K562 (cell line): ENCODE measurements at regions of chr4 and their contacts with region 1.

Region 1: DNA sequence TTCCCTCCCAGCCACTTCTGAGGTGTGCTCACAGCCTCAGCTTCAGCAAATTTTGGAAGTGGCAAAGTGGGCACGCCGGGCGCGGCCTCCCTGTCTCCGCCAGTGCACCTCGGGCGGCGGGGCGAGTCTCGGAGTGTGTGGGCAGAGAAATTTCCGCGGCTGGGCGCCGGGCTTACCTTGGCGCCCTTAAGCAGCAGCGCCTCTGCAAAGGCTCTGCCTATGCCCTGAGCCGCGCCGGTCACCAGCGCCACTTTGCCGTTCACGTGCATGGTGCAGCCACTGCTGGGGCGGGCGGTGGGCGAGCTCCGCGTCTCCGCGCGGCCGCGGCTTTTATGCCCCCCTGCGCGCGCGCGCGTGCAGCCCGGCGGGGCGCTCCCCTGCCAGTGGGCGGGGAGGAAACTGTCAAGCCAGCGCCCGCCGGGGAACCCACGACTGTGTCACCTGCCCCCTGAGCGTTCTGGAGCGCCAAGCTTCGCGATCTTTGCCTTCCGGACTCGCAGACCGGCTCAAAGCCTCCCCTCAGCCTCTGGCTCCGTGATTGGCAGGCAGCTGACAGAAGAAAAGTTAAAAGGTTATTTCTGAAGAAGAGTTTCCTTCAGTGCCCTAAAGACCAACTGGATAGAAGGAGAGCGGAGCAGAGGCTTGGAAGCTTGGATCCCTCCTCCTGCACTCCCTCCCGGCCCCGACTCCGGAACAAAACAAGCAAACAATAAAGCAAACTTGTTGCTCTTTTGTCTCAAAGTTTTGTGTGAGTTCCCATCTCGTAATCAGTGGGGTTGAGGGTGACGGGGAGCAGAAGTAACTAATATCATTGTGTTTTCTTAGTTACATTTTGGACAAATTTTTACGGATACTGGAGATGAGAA is at the start of gene HPGD:
- DNase-seq: peak; percentile 25 to 61 (median 36)
- ATAC-seq: peak; percentile 88
- H3K4me3 ChIP-seq: peak within 1 kb of the TSS; percentile 64
- H3K27ac ChIP-seq: peak within 1 kb of the TSS; percentile 41
- H3K4me1 ChIP-seq: peaks cover 9 to 13% of the 10 kb centered on the region in 2 experiments; a peak in 3 of 5 replicates
- H3K27me3 ChIP-seq: no peaks in the 10 kb centered on the region
- CTCF ChIP-seq: no peak
- EP300 ChIP-seq: no peak
- POLR2A ChIP-seq: no peak
- RAD21 ChIP-seq: no peak
- polyA plus RNA-seq, gene HPGD: 2.3 to 3.2 TPM

Region 2: DNA sequence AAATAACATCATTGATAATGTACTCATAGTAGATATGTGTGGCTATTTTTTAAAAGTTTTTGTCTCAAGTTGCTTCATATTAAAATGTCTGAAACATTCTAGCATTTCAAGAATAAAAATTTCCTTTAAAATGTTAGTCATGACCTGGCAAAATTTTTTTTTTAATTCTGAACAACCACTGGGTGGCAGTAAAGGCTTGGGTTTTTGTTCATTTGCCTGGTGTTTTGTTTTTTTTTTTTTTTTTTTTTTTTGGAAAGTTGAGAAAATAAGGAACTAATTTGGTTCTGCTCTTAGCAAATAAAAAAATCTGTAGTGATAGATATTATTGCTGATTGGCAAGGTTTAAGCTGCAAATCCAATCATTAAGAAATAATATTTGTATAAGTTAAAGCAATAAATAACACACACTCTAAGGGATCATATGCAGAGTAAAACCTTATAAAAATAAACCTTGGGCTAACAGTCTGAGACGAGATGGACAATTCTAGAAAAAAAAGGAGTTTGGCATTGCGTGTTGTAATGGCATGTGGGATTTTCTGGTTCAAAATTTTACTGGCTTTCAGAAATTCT is 157.3 kb before region 1 on chr4:
- CTCF ChIA-PET with region 1: no interaction called
- POLR2A ChIA-PET with region 1: no interaction called
- in situ Hi-C with region 1: no loop called
- intact Hi-C with region 1: loop called (anchors 2 kb)
- DNase-seq: peak; percentile 15 to 68 (median 20)
- ATAC-seq: no peak
- H3K4me3 ChIP-seq: no peak overlapping the region
- H3K27ac ChIP-seq: no peak overlapping the region
- H3K4me1 ChIP-seq: no peaks in the 10 kb centered on the region
- H3K27me3 ChIP-seq: no peaks in the 10 kb centered on the region
- CTCF ChIP-seq: peak; percentile 17 to 67 (median 47); a peak in 3 of 6 replicates
- EP300 ChIP-seq: no peak
- POLR2A ChIP-seq: no peak
- RAD21 ChIP-seq: peak; percentile 55 to 80

Region 3: GRCh38 chr4:174423257-174423944 is 99.0 kb before region 1 on chr4:
- CTCF ChIA-PET with region 1: no interaction called
- POLR2A ChIA-PET with region 1: no interaction called
- in situ Hi-C with region 1: no loop called
- intact Hi-C with region 1: loop called (anchors 5 kb)
- DNase-seq: peak in 3 of 4 experiments; percentile 13 to 75 (median 43)
- ATAC-seq: peak; percentile 52
- H3K4me3 ChIP-seq: no peak overlapping the region; the same call in 1 of the 2 replicates
- H3K27ac ChIP-seq: peak overlapping the region; percentile 76
- H3K4me1 ChIP-seq: peaks cover 11 to 36% of the 10 kb centered on the region in 2 experiments; a peak in 4 of 5 replicates
- H3K27me3 ChIP-seq: no peaks in the 10 kb centered on the region
- CTCF ChIP-seq: no peak
- EP300 ChIP-seq: peak; percentile 76
- POLR2A ChIP-seq: no peak
- RAD21 ChIP-seq: no peak; a peak in 1 of 4 replicates

Region 4: GRCh38 chr4:174437324-174437723 is 85.1 kb before region 1 on chr4:
- CTCF ChIA-PET with region 1: no interaction called
- POLR2A ChIA-PET with region 1: no interaction called
- in situ Hi-C with region 1: no loop called
- intact Hi-C with region 1: no loop called
- DNase-seq: no peak
- ATAC-seq: no peak
- H3K4me3 ChIP-seq: no peak overlapping the region
- H3K27ac ChIP-seq: no peak overlapping the region
- H3K4me1 ChIP-seq: 0 out of 5 replicates have a peak, but pooled peaks cover 0 to 4% of the 10 kb centered on the region in 2 experiments
- H3K27me3 ChIP-seq: no peaks in the 10 kb centered on the region
- CTCF ChIP-seq: no peak
- EP300 ChIP-seq: no peak
- POLR2A ChIP-seq: no peak
- RAD21 ChIP-seq: no peak

Region 5: GRCh38 chr4:174460684-174461083 is 61.7 kb before region 1 on chr4:
- CTCF ChIA-PET with region 1: no interaction called
- POLR2A ChIA-PET with region 1: no interaction called
- in situ Hi-C with region 1: no loop called
- intact Hi-C with region 1: no loop called
- DNase-seq: no peak
- ATAC-seq: no peak
- H3K4me3 ChIP-seq: no peak overlapping the region
- H3K27ac ChIP-seq: no peak overlapping the region
- H3K4me1 ChIP-seq: no peaks in the 10 kb centered on the region
- H3K27me3 ChIP-seq: no peaks in the 10 kb centered on the region
- CTCF ChIP-seq: no peak
- EP300 ChIP-seq: no peak
- POLR2A ChIP-seq: no peak
- RAD21 ChIP-seq: no peak

Region 6: GRCh38 chr4:174580597-174580996 is 58.2 kb after region 1 on chr4:
- CTCF ChIA-PET with region 1: no interaction called
- POLR2A ChIA-PET with region 1: no interaction called
- in situ Hi-C with region 1: no loop called
- intact Hi-C with region 1: no loop called
- DNase-seq: no peak
- ATAC-seq: no peak
- H3K4me3 ChIP-seq: no peak overlapping the region
- H3K27ac ChIP-seq: no peak overlapping the region
- H3K4me1 ChIP-seq: no peaks in the 10 kb centered on the region; a peak in 1 of 5 replicates
- H3K27me3 ChIP-seq: no peaks in the 10 kb centered on the region
- CTCF ChIP-seq: no peak
- EP300 ChIP-seq: peak; percentile 46; the same call in 1 of the 2 replicates
- POLR2A ChIP-seq: no peak
- RAD21 ChIP-seq: no peak

Region 7: DNA sequence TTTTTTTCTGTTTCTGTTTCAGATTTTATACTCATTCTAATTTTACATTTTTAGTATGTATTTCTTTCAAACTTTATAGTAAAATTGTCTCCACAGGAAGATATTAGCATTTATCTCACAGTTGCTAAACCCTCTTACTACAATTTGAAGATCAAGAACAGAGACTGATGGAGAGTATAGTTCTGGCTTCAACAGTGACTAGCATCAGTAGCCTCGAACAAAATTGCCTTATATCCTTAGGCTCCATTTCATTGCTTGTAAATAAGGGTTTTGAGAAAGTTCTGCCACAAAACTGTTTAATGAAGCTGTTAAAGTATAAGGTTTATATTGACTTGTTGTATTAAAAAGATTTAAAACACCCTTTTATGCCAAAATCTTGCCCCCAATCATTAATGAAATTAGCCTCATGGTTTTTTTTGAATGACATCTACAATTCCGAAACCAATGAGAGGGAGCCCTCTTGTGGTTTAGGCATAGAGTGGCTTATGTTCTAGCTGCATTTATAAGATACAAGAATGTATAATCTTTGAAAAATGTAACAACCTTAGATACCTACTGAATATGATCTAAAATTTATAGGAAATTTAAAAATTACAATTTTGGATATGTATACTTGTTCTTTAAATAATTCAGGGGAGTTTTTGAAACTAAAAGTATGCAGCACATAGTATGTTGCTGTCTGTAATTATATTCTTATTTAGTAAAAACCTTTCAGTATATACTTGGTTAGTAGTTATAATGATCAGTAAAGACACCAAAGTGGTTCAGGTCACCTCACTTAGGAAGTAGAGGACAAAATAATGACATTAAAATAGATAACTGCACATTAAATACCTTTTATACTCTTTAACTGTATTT is 109.7 kb after region 1 on chr4:
- CTCF ChIA-PET with region 1: no interaction called
- POLR2A ChIA-PET with region 1: no interaction called
- in situ Hi-C with region 1: no loop called
- intact Hi-C with region 1: loop called (anchors 5 kb)
- DNase-seq: peak; percentile 24 to 71 (median 32)
- ATAC-seq: peak; percentile 90
- H3K4me3 ChIP-seq: no peak overlapping the region
- H3K27ac ChIP-seq: no peak overlapping the region
- H3K4me1 ChIP-seq: no peaks in the 10 kb centered on the region
- H3K27me3 ChIP-seq: no peaks in the 10 kb centered on the region
- CTCF ChIP-seq: peak; percentile 48 to 83 (median 58); a peak in 5 of 6 replicates
- EP300 ChIP-seq: no peak
- POLR2A ChIP-seq: no peak
- RAD21 ChIP-seq: peak; percentile 86 to 92

Region 8: GRCh38 chr4:174714393-174715211 is 192.2 kb after region 1 on chr4:
- CTCF ChIA-PET with region 1: no interaction called
- POLR2A ChIA-PET with region 1: no interaction called
- in situ Hi-C with region 1: no loop called
- intact Hi-C with region 1: loop called (anchors 5 kb)
- DNase-seq: peak; percentile 70 to 84 (median 72)
- ATAC-seq: peak; percentile 95
- H3K4me3 ChIP-seq: no peak overlapping the region
- H3K27ac ChIP-seq: no peak overlapping the region
- H3K4me1 ChIP-seq: no peaks in the 10 kb centered on the region; a peak in 1 of 5 replicates
- H3K27me3 ChIP-seq: no peaks in the 10 kb centered on the region
- CTCF ChIP-seq: peak; percentile 64 to 84 (median 81)
- EP300 ChIP-seq: no peak
- POLR2A ChIP-seq: no peak
- RAD21 ChIP-seq: peak; percentile 81 to 82